Upper lobe of right lung (tissue), 1 donor: ENCODE measurements at regions of chr15 and their contacts with region 1.

Region 1: DNA sequence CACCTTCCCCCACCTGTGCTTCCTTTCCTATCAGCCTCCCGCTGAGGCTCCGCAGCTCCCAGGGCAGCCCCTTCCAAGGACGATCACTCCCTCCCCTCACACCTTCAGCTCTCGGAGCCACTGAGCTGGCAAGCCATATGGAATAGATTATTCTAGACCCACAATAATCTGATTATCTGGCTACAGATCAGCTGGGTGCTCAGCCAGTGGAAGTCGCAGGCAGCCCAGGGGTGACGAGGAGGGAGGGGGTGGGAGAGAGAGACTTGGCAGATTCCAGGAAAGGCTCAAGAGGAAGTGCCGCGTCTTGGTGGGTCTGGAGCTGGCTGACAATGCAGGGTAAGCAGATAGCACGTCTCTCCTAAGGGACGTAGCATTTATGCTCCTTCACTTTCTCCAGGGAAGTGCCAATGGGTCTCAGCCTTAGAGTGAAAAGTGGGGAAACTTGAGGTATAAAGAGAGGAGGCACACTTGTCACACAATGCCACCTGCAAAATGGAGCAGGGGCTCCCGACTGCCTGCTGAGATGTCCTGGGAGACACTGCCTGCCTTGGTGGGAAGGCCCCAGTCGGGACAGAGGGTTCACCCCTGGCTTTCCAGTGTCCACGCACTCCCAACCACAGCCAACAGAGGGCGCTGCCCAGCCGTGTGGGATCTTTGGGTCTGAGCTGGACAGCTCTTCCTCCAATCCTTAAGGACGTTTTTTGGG is 9.4 kb upstream of the MESP1 start:
- DNase-seq: peak; percentile 91
- ATAC-seq: peak; percentile 95
- H3K4me3 ChIP-seq: no peak overlapping the region
- H3K27ac ChIP-seq: no peak overlapping the region
- H3K4me1 ChIP-seq: no peaks in the 10 kb centered on the region
- H3K27me3 ChIP-seq: no peaks in the 10 kb centered on the region
- CTCF ChIP-seq: peak; percentile 97

Region 2: DNA sequence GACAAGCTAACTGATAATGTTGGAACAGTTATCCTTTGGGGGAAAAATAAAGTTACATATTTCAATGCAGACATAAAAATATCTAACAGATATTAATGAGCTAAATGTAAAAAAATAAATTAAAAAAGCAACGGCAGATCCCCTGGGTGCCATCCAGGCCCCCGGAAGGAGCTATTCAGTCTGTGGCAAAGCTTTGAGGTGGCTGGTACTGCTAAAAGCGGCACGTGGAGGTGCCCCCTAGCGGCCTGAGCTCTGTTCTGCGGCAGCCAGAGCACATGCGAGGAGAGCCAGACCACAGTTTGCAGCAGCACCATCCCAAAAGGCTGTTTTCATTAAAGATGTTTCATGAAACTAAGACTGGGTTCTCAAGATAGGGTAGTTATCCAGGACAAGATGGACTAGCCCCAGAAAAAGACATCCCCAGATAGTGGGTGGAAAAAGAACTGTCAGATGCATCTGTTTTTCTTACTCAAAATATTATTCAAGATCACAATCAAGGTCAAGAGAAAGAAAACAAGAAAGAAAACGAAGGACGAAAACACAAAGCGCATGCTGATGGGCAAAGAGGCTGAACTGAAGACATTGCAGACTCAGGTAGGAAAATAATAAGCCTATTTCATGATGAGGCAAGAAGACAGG is 114.6 kb after region 1 on chr15:
- intact Hi-C with region 1: loop called (anchors 5 kb)
- DNase-seq: peak; percentile 90
- ATAC-seq: peak; percentile 99
- H3K4me3 ChIP-seq: no peak overlapping the region
- H3K27ac ChIP-seq: no peak overlapping the region
- H3K4me1 ChIP-seq: no peaks in the 10 kb centered on the region
- H3K27me3 ChIP-seq: no peaks in the 10 kb centered on the region
- CTCF ChIP-seq: peak; percentile 96

Region 3: DNA sequence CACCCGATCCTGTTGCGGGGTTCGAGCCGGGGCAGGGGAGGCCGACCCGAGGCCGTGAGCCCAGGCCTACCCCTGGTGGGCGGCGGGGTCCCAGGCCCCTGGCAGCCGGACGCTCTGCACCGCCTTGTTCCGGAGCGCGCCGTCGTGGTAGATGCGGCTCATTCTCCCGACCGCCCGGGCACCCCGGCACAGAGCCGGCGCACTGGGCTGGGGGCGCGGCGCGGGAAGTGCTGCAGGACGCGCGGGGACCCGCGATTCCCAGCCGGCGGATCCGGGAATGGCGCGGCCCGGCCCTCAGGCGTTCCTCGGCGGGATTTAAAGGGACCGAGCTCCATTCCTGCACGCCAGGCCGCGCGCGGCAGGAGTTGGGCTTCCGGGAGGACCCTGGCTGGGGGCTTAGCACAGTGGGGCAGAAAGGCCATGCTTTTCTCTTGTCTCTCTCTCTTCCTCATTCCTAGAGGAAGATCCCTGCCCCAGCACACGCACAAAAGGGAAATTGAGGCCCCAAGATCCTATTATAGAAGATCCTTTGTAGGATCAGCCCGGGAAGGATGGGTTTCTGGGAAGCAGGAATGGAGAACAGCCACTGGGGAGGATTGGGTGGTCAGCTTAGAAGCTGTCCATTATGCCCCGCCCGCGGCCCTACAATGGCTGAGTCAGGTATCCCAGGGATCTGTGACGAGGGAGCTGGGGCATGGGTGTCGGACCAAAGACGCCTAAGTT is 152.4 kb after region 1 on chr15 and contains the start of gene ARPIN:
- intact Hi-C with region 1: no loop called
- DNase-seq: peak; percentile 83
- ATAC-seq: peak; percentile 79
- H3K4me3 ChIP-seq: peak within 1 kb of the TSS; percentile 83
- H3K27ac ChIP-seq: peak within 1 kb of the TSS; percentile 86
- H3K4me1 ChIP-seq: peaks cover 20% of the 10 kb centered on the region
- H3K27me3 ChIP-seq: no peaks in the 10 kb centered on the region
- CTCF ChIP-seq: no peak
- total RNA-seq, gene ARPIN: 30.5 TPM

Region 4: DNA sequence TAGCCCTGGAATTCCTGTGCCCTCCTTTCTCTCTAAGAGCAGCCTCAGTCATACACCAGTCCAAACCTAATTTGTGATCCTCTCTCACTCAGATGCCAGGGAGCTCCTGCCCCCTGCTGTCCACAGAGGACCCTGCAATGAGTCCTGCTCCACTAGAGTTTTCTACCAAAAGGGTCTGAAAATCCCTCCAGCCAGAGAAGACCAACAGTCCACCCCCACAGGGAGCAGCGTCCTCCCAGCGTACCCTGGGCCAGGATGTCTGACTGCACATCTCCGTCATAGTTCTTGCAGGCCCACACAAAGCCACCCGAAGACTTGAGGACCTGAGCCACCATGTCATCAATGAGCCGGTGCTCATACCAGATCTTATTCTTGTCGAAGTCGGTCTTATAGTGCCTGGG is 326.4 kb after region 1 on chr15:
- intact Hi-C with region 1: no loop called
- DNase-seq: peak; percentile 74
- ATAC-seq: peak; percentile 78
- H3K4me3 ChIP-seq: no peak overlapping the region
- H3K27ac ChIP-seq: no peak overlapping the region
- H3K4me1 ChIP-seq: peaks cover 7% of the 10 kb centered on the region
- H3K27me3 ChIP-seq: no peaks in the 10 kb centered on the region
- CTCF ChIP-seq: peak; percentile 75